PC-3 (cell line): ENCODE measurements at regions of chr6 and their contacts with region 1.

Region 1: DNA sequence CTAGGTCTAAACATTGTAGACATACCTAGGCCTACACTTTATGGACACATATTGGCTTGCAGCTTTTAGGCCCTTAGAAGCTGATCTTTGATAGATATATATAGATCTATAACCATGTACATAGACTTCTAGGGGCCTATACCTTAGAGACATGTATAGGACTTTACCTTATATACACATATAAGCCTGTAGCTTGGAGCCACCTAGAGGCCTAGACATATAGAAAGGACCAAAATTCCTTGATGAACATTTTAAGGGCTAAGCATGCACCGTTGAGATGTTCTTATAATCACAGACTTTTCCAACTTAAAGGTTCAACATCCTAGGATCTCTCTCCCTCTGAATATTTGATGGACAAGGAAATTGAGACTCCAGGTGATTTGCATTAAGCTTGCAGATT is 371.7 kb upstream of the SASH1 start:
- DNase-seq: peak; percentile 44
- ATAC-seq: peak; percentile 58
- H3K4me3 ChIP-seq: no peak overlapping the region
- H3K27ac ChIP-seq: no peak overlapping the region
- H3K4me1 ChIP-seq: peaks cover 17% of the 10 kb centered on the region
- H3K27me3 ChIP-seq: no peaks in the 10 kb centered on the region
- CTCF ChIP-seq: peak; percentile 61

Region 2: GRCh38 chr6:147849401-147850330 is 121.3 kb before region 1 on chr6:
- CTCF ChIA-PET with region 1: no interaction called
- POLR2A ChIA-PET with region 1: no interaction called
- intact Hi-C with region 1: loop called (anchors 2 kb)
- DNase-seq: no peak
- ATAC-seq: peak; percentile 50
- H3K4me3 ChIP-seq: no peak overlapping the region
- H3K27ac ChIP-seq: no peak overlapping the region
- H3K4me1 ChIP-seq: peaks cover 12% of the 10 kb centered on the region
- H3K27me3 ChIP-seq: no peaks in the 10 kb centered on the region
- CTCF ChIP-seq: no peak

Region 3: DNA sequence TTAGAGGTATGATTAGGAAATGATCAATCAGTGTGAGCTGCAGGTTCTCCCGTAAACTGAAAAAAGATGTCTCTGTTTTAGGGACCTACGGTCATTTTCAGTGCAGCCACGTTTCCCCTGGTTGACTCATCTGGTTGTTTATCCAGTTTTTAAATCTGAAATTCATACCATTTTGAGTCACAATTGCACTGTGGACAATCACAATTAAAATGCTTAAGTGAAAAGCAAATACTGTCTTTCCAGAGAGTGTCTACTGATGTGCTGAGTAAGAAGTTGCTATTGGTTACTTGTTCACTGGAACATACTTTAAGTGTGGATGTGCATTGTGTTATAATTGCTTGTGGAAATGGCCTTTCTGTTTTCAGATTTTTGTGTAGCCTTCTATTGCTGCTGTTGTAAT is 66.5 kb after region 1 on chr6:
- CTCF ChIA-PET with region 1: no interaction called
- POLR2A ChIA-PET with region 1: no interaction called
- intact Hi-C with region 1: loop called (anchors 1 kb)
- DNase-seq: peak; percentile 79
- ATAC-seq: peak; percentile 97
- H3K4me3 ChIP-seq: no peak overlapping the region
- H3K27ac ChIP-seq: no peak overlapping the region
- H3K4me1 ChIP-seq: peaks cover 14% of the 10 kb centered on the region
- H3K27me3 ChIP-seq: no peaks in the 10 kb centered on the region
- CTCF ChIP-seq: no peak

Region 4: GRCh38 chr6:148085631-148086331 is 114.8 kb after region 1 on chr6:
- CTCF ChIA-PET with region 1: no interaction called
- POLR2A ChIA-PET with region 1: no interaction called
- intact Hi-C with region 1: loop called (anchors 5 kb)
- DNase-seq: no peak
- ATAC-seq: no peak
- H3K4me3 ChIP-seq: no peak overlapping the region
- H3K27ac ChIP-seq: no peak overlapping the region
- H3K4me1 ChIP-seq: peaks cover 6% of the 10 kb centered on the region; the same call in 1 of the 2 replicates
- H3K27me3 ChIP-seq: no peaks in the 10 kb centered on the region
- CTCF ChIP-seq: no peak

Region 5: DNA sequence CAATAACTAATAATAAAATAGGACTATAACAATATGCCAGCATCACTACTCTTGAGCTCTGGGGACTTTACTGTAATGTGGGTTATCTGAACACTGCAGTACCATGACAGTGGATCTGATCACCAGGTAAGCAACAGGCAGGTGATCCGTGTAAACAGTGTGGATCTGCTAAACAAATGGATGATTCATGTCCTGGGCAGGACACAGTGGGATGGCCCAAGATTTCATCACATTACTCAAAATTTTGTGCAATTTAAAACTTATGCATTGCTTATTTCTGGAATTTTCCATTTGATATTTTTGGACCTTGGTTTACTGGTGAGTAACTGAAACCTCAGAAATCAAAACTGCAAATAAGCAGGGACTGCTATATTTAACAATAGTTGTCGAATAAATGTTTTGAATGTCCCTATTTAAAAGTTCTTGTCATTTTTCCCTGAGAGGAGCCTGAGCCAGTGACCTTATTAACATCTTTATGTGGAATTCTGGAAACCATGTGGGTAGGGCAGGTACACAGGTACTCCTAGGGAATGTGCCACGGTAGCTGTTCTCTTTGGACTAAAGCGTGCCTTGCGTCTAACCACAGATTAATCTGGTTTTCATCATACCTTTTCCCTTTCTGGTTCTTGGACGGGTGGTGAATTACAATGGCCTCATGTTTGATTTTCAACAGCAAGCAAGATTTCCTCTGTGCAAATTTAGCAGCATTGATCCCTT is 157.2 kb after region 1 on chr6:
- CTCF ChIA-PET with region 1: no interaction called
- POLR2A ChIA-PET with region 1: no interaction called
- intact Hi-C with region 1: loop called (anchors 1 kb)
- DNase-seq: peak; percentile 66
- ATAC-seq: peak; percentile 96
- H3K4me3 ChIP-seq: no peak overlapping the region
- H3K27ac ChIP-seq: peak overlapping the region; percentile 39
- H3K4me1 ChIP-seq: peaks cover 24% of the 10 kb centered on the region
- H3K27me3 ChIP-seq: no peaks in the 10 kb centered on the region
- CTCF ChIP-seq: no peak

Region 6: GRCh38 chr6:148144917-148145521 is 174.0 kb after region 1 on chr6:
- CTCF ChIA-PET with region 1: no interaction called
- POLR2A ChIA-PET with region 1: no interaction called
- intact Hi-C with region 1: loop called (anchors 2 kb)
- DNase-seq: peak; percentile 75
- ATAC-seq: no peak
- H3K4me3 ChIP-seq: peak overlapping the region; percentile 50; the same call in 1 of the 2 replicates
- H3K27ac ChIP-seq: no peak overlapping the region
- H3K4me1 ChIP-seq: peaks cover 32% of the 10 kb centered on the region
- H3K27me3 ChIP-seq: no peaks in the 10 kb centered on the region
- CTCF ChIP-seq: peak; percentile 80